ENCODE measurements at regions of chr17 and their contacts with region 1.

Region 1: DNA sequence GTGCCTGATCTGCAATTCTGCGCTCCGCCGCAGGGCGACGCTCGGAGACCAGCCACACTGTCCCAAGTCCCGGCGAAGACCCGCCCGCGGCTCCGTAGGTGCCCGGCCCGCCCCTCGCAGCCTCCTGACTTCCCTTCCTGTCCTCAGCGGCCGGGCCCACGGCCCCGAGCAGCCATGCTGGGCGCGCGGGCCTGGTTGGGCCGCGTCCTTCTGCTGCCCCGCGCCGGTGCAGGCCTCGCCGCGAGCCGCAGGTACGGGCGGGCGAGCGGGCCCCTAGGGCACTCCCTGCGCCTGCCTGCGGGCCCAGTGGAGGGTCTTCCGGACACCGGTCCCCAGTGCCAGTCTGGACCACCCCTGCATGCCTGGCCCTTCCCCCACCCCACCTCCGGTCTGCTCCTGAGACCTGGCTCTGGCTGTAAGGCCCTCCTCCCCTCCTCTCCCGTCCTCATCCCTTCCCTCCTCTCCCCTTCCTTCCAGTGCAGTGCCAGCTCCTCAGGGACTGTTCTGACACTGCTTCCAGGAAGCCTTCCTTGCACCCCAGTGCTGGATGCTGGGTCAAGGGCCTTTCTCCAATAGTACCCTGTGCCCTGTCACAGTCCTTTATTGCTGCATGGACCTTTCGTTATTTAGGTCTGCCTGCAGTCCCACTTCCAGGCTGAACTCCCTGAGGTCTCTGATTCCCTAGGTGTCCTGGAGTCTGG is at the start of gene SPATA20:
- DNase-seq: peak; percentile 72 to 93 (median 84)
- ATAC-seq: peak; percentile 88
- H3K4me3 ChIP-seq: peak within 1 kb of the TSS; percentile 57 to 65
- H3K4me3 Mint-ChIP-seq: peak within 1 kb of the TSS; percentile 81
- H3K27ac ChIP-seq: peak within 1 kb of the TSS; percentile 34 to 63
- H3K27ac Mint-ChIP-seq: peak within 1 kb of the TSS; percentile 55
- H3K4me1 ChIP-seq: peaks cover 20% of the 10 kb centered on the region
- H3K4me1 Mint-ChIP-seq: peaks cover 17% of the 10 kb centered on the region
- H3K27me3 ChIP-seq: no peaks in the 10 kb centered on the region
- H3K27me3 Mint-ChIP-seq: peaks cover 6% of the 10 kb centered on the region
- CTCF ChIP-seq: peak; percentile 95
- total RNA-seq, gene SPATA20: 33.0 to 37.2 TPM

Region 2: DNA sequence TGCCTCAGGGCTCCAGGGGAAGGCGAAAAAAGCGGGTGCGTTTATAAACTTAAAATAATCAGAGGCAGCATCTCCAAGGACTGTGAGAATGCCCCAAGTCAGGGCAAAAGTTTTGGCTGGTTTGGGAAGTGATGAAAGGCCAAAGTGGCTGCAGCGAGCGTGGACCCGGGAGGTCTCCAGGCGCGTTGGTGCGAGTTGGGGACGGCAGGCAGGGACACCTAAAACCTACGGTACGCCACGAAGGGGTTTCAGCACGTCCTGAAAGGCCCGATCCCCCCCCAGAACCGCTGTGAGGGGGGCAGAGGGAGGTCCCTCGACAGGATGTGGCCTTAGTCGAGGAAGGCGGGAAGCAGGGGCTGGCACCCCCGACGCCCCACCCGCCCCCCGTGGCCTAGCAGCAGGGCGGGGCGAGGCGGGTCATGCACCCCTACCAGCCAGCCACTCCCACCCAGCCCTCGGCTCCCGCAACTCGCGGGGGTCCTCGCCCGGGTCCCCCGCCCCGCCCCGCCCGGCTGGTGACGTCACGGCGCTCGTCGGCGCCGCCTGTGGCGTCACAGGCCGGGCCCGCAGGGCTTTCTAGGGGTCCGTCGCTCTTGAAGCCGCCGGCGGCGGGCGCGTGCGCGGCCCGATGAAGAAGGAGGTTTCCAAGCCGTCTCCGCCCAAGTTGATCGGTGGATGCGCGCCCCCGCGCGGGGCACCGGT is 39.2 kb before region 1 on chr17 and contains the start of gene MYCBPAP:
- CTCF ChIA-PET with region 1: no interaction called
- POLR2A ChIA-PET with region 1: no interaction called
- intact Hi-C with region 1: loop called in 1 of 2 experiments (anchors 2 kb)
- DNase-seq: peak; percentile 68 to 91 (median 76)
- ATAC-seq: peak; percentile 73
- H3K4me3 ChIP-seq: peak within 1 kb of the TSS; percentile 68 to 77
- H3K4me3 Mint-ChIP-seq: peak within 1 kb of the TSS; percentile 95
- H3K27ac ChIP-seq: peak within 1 kb of the TSS; percentile 50 to 56
- H3K27ac Mint-ChIP-seq: peak within 1 kb of the TSS; percentile 94
- H3K4me1 ChIP-seq: peaks cover 22% of the 10 kb centered on the region
- H3K4me1 Mint-ChIP-seq: peaks cover 43% of the 10 kb centered on the region
- H3K27me3 ChIP-seq: no peaks in the 10 kb centered on the region
- H3K27me3 Mint-ChIP-seq: no peaks in the 10 kb centered on the region
- CTCF ChIP-seq: no peak
- total RNA-seq, gene MYCBPAP: 3.4 to 3.5 TPM

Region 3: GRCh38 chr17:50575581-50576210 is 28.5 kb after region 1 on chr17:
- CTCF ChIA-PET with region 1: no interaction called
- POLR2A ChIA-PET with region 1: no interaction called
- intact Hi-C with region 1: no loop called
- DNase-seq: no peak
- ATAC-seq: no peak
- H3K4me3 ChIP-seq: no peak overlapping the region
- H3K4me3 Mint-ChIP-seq: no peak overlapping the region
- H3K27ac ChIP-seq: no peak overlapping the region
- H3K27ac Mint-ChIP-seq: no peak overlapping the region
- H3K4me1 ChIP-seq: no peaks in the 10 kb centered on the region
- H3K4me1 Mint-ChIP-seq: no peaks in the 10 kb centered on the region
- H3K27me3 ChIP-seq: peaks cover 0 to 2% of the 10 kb centered on the region in 2 experiments
- H3K27me3 Mint-ChIP-seq: peaks cover 14% of the 10 kb centered on the region
- CTCF ChIP-seq: no peak

Region 4: GRCh38 chr17:50689956-50690886 is 143.0 kb after region 1 on chr17:
- CTCF ChIA-PET with region 1: interaction called, 3 read pairs
- POLR2A ChIA-PET with region 1: no interaction called
- intact Hi-C with region 1: loop called in 1 of 2 experiments (anchors 1 kb)
- DNase-seq: no peak
- ATAC-seq: no peak
- H3K4me3 ChIP-seq: no peak overlapping the region
- H3K4me3 Mint-ChIP-seq: no peak overlapping the region
- H3K27ac ChIP-seq: no peak overlapping the region
- H3K27ac Mint-ChIP-seq: no peak overlapping the region
- H3K4me1 ChIP-seq: no peaks in the 10 kb centered on the region
- H3K4me1 Mint-ChIP-seq: no peaks in the 10 kb centered on the region
- H3K27me3 ChIP-seq: no peaks in the 10 kb centered on the region
- H3K27me3 Mint-ChIP-seq: no peaks in the 10 kb centered on the region
- CTCF ChIP-seq: no peak

Region 5: GRCh38 chr17:50783193-50783660 is 236.0 kb after region 1 on chr17:
- CTCF ChIA-PET with region 1: interaction called, 3 read pairs
- POLR2A ChIA-PET with region 1: no interaction called
- intact Hi-C with region 1: loop called in 1 of 2 experiments (anchors 5 kb)
- DNase-seq: peak; percentile 62 to 87 (median 79)
- ATAC-seq: peak; percentile 81
- H3K4me3 ChIP-seq: no peak overlapping the region
- H3K4me3 Mint-ChIP-seq: no peak overlapping the region
- H3K27ac ChIP-seq: no peak overlapping the region
- H3K27ac Mint-ChIP-seq: no peak overlapping the region
- H3K4me1 ChIP-seq: peaks cover 19% of the 10 kb centered on the region
- H3K4me1 Mint-ChIP-seq: peaks cover 29% of the 10 kb centered on the region
- H3K27me3 ChIP-seq: no peaks in the 10 kb centered on the region
- H3K27me3 Mint-ChIP-seq: peaks cover 9% of the 10 kb centered on the region
- CTCF ChIP-seq: peak; percentile 92

Region 6: GRCh38 chr17:50949989-50950881 is 403.1 kb after region 1 on chr17:
- CTCF ChIA-PET with region 1: no interaction called
- POLR2A ChIA-PET with region 1: no interaction called
- intact Hi-C with region 1: loop called (anchors 5 to 10 kb)
- DNase-seq: peak; percentile 32 to 80 (median 60)
- ATAC-seq: peak; percentile 87
- H3K4me3 ChIP-seq: no peak overlapping the region
- H3K4me3 Mint-ChIP-seq: no peak overlapping the region
- H3K27ac ChIP-seq: no peak overlapping the region
- H3K27ac Mint-ChIP-seq: no peak overlapping the region
- H3K4me1 ChIP-seq: peaks cover 12% of the 10 kb centered on the region
- H3K4me1 Mint-ChIP-seq: peaks cover 22% of the 10 kb centered on the region
- H3K27me3 ChIP-seq: no peaks in the 10 kb centered on the region
- H3K27me3 Mint-ChIP-seq: no peaks in the 10 kb centered on the region
- CTCF ChIP-seq: peak; percentile 49